ENCODE measurements at regions of chr1 and their contacts with region 1.

Region 1: GRCh38 chr1:165914136-165914798 is 86.9 kb downstream of the UCK2 start:
- DNase-seq: peak in 1 of 2 donors; percentile 80
- H3K4me3 ChIP-seq: no peak overlapping the region
- CTCF ChIP-seq: peak in 2 of 3 donors; percentile 11 to 79
- POLR2A ChIP-seq: no peak

Region 2: DNA sequence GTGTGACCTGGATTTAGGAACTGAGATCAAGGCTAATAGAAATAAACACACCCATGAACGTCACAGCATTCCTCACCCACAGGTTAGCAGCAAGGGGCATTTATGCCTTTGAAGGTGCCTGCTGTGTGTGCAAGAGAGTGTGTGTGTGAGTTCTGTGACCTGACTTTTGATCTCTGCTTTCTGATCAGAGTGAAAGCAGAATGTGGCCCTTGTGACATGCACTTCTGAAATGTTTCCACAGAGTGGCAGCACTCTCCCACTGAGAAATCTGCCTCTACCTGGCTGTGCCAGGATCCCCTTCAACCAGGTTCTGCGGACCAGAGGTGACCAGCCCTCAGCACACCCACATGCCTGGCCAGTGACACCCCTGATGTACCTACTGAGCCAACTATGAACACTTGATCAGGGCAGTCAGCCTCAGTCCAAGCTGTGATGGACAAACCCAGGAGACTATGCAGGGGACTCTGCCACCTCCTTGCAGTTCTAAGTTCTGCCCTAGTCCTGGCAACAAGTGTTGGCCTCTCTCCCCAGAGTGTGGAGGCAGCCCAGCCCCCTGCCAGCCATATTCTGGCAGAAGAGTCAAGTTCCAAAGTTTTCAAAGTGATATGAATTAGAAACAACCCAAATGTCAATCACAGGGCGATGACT is 510.3 kb before region 1 on chr1:
- intact Hi-C with region 1: loop called (anchors 10 kb)
- DNase-seq: no peak
- H3K4me3 ChIP-seq: no peak overlapping the region
- CTCF ChIP-seq: no peak
- POLR2A ChIP-seq: no peak

Region 3: GRCh38 chr1:165597883-165598675 is 316.2 kb before region 1 on chr1:
- intact Hi-C with region 1: loop called (anchors 5 kb)
- DNase-seq: peak; percentile 94 to 98
- H3K4me3 ChIP-seq: peak overlapping the region; percentile 19
- CTCF ChIP-seq: no peak
- POLR2A ChIP-seq: no peak

Region 4: DNA sequence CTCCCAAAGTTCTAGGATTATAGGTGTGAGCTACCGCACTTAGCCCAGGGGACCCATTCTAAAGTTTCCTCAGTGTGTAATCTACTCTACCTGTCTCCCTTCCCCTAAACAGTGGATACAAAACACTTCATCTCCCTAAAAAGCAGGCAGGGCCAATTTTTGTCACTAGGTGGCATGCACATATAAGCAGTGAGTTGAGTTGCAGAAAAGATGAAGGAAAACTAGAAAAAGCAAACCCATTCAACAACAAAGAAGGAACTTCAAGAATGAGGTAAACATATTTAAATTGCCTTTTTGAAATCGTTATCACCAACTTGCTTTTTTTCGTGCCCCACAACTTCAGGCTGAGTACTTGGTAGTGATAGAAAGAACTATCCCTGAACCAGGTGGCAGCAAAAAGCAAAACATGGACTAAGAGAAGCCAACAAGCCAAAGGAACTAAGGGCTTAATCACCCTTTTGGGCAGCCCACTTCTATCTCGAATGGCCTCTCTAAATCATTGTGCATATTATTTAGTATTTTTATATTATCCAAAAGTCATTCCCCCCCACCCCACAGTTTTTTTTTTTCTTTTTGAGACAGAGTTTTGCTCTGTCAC is 196.2 kb before region 1 on chr1:
- intact Hi-C with region 1: loop called (anchors 10 kb)
- DNase-seq: no peak
- H3K4me3 ChIP-seq: no peak overlapping the region
- CTCF ChIP-seq: no peak
- POLR2A ChIP-seq: no peak

Region 5: GRCh38 chr1:166705376-166706289 is 791.4 kb after region 1 on chr1:
- intact Hi-C with region 1: no loop called
- DNase-seq: no peak
- H3K4me3 ChIP-seq: no peak overlapping the region
- CTCF ChIP-seq: no peak
- POLR2A ChIP-seq: no peak